Heart left ventricle (tissue), 16 donors: ENCODE measurements at regions of chr16 and their contacts with region 1.

Region 1: GRCh38 chr16:20814784-20815183 is 8.5 kb downstream of the REXO5 start:
- DNase-seq: no peak
- ATAC-seq: no peak
- H3K4me3 ChIP-seq: no peak overlapping the region
- H3K27ac ChIP-seq: no peak overlapping the region
- H3K4me1 ChIP-seq: no peaks in the 10 kb centered on the region
- H3K27me3 ChIP-seq: no peaks in the 10 kb centered on the region
- CTCF ChIP-seq: no peak
- POLR2A ChIP-seq: no peak

Region 2: DNA sequence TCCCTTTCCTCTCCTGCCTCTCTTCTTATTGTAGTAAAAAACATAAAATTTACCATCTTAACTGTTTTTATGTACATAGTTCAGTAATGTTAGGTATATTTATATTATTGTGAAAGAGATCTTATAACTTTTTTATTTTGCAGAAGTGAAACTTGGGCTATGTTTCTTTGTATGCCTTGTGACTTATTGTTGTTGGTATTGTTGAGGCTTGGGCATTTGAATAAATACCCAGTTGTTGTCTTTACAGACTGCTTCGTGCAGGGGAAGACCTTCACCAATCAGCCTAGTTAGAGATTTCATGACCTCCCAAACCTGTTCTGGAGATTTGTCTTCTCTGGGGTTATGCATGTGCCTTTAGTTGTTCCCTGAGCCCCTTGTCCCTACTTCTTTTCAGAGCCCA is 23.5 kb after region 1 on chr16:
- intact Hi-C with region 1: loop called in 1 of 10 experiments (anchors 2 kb)
- DNase-seq: no peak
- ATAC-seq: no peak
- H3K4me3 ChIP-seq: no peak overlapping the region
- H3K27ac ChIP-seq: no peak overlapping the region
- H3K4me1 ChIP-seq: no peaks in the 10 kb centered on the region
- H3K27me3 ChIP-seq: no peaks in the 10 kb centered on the region
- CTCF ChIP-seq: no peak
- POLR2A ChIP-seq: no peak

Region 3: DNA sequence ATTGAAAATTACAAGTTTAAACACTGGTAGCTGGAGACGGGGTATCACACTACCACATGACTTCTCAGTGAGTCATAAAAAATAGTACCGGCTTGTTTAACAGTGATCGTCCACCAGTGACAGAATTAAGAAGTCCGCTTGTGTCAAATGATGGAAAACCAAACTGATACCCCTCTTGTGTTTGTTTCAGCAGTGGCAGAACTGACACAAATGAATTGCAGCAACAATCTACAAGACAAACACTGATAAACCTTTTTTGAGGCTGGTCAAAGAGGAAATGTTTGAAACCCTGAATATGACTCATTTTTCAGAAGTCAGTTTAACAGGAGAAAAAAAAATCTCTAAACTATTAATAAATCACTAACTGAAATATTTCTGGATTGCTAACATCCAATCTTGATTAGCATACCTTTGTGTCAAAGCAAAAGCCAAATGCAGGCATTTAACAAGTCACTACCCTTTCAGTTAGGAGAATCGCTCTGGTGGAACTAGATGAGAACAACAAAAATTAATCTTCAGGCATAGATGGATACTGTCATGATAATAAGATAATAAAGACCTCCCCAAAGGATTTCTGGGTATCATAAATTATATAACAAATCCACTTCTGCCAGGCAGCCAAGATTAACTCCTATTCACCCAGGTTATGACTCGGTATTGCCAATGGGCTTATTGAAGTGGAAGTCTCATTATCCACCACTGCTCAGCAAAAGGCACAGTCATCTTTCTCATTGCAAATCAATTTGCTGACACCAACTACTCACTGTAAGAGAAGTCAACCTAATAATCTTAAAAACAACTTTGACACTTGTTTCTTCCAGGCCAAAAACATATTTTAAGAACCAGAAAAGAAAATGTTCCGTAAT is 64.6 kb after region 1 on chr16:
- intact Hi-C with region 1: loop called in 1 of 10 experiments (anchors 2 kb)
- DNase-seq: no peak
- ATAC-seq: peak in 3 of 4 donors; percentile 49 to 59 (median 53)
- H3K4me3 ChIP-seq: no peak overlapping the region
- H3K27ac ChIP-seq: peak overlapping the region; percentile 7 to 74 (median 67)
- H3K4me1 ChIP-seq: peaks cover 2 to 76% (median 37%) of the 10 kb centered on the region in 12 donors
- H3K27me3 ChIP-seq: no peaks in the 10 kb centered on the region
- CTCF ChIP-seq: no peak
- POLR2A ChIP-seq: no peak